Activated naive CD4-positive, alpha-beta T cell treated with anti-CD3 and anti-CD28 coated beads for 36 hours (primary cell): ENCODE measurements at regions of chr2 and their contacts with region 1.

Region 1: DNA sequence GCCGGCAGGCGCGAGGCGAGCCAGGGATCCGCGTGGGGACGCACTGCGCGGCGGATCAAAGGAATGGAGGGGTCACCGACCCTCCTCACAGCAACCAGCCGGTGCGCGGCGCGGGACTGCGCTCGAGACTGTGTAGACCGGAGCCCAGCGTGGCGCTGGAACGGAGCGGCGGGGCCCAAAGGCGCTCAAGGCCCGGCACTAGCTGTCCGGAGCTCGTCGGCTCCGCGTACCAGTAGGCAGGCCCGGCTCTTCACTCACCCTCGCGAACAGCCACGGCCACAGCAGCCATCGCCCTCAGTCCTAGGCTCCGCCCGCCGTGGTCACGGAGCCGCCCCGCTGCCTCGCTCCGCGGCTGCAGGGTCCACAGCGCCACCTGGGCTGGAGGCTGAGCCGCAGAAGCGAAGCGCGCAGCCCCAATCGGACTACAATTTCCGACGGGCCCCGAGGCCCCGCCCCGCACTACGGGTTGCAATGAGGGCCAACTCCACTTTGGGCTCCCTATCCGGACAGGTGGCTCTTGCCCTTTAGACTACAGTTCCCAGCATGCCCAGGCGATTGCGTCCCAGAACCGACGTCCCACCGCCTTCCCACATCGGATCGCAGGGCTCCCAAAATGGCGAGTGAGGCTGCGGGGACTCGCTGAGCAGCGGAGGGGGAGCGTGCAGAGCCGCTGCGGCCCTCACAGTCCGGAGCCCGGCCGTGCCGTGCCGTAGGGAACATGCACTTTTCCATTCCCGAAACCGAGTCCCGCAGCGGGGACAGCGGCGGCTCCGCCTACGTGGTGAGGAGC is at the starts of genes EIF2B4 and SNX17:
- DNase-seq: peak; percentile 100
- H3K4me3 Mint-ChIP-seq: peak within 1 kb of the TSS; percentile 83
- H3K27ac Mint-ChIP-seq: peak within 1 kb of the TSS; percentile 95
- H3K4me1 Mint-ChIP-seq: peaks cover 30% of the 10 kb centered on the region
- H3K27me3 Mint-ChIP-seq: no peaks in the 10 kb centered on the region
- total RNA-seq, gene EIF2B4: 24.4 to 25.2 TPM
- total RNA-seq, gene SNX17: 68.5 to 75.5 TPM

Region 2: DNA sequence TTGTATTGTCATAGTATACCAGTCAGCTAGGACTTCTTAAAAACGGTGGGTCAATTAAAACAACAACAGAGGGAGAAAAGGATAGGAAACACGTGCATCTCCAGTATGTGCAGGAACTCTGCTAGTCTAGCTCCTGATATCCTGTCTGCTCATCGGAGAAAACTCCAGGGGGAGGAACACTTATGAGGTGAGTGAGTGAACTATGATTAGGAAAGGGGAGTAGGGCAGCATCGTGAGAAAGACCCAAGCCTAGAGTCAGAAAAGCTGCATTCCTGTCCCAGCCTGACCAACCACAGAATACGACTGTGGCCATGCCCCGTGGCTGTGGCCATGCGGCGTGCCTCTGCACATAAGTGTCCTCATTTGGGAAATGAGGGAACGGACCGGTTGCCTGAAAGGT is 1731.0 kb before region 1 on chr2:
- CTCF ChIA-PET with region 1: no interaction called
- intact Hi-C with region 1: no loop called
- DNase-seq: no peak
- H3K4me3 Mint-ChIP-seq: no peak overlapping the region
- H3K27ac Mint-ChIP-seq: no peak overlapping the region
- H3K4me1 Mint-ChIP-seq: no peaks in the 10 kb centered on the region
- H3K27me3 Mint-ChIP-seq: no peaks in the 10 kb centered on the region

Region 3: GRCh38 chr2:27086090-27086723 is 284.0 kb before region 1 on chr2:
- CTCF ChIA-PET with region 1: no interaction called
- intact Hi-C with region 1: loop called (anchors 1 kb)
- DNase-seq: peak; percentile 96
- H3K4me3 Mint-ChIP-seq: peak overlapping the region; percentile 81
- H3K27ac Mint-ChIP-seq: peak overlapping the region; percentile 63
- H3K4me1 Mint-ChIP-seq: peaks cover 30% of the 10 kb centered on the region
- H3K27me3 Mint-ChIP-seq: no peaks in the 10 kb centered on the region

Region 4: GRCh38 chr2:27096748-27097297 is 273.4 kb before region 1 on chr2:
- CTCF ChIA-PET with region 1: no interaction called
- intact Hi-C with region 1: no loop called
- DNase-seq: no peak
- H3K4me3 Mint-ChIP-seq: no peak overlapping the region
- H3K27ac Mint-ChIP-seq: no peak overlapping the region
- H3K4me1 Mint-ChIP-seq: peaks cover 12% of the 10 kb centered on the region
- H3K27me3 Mint-ChIP-seq: no peaks in the 10 kb centered on the region

Region 5: DNA sequence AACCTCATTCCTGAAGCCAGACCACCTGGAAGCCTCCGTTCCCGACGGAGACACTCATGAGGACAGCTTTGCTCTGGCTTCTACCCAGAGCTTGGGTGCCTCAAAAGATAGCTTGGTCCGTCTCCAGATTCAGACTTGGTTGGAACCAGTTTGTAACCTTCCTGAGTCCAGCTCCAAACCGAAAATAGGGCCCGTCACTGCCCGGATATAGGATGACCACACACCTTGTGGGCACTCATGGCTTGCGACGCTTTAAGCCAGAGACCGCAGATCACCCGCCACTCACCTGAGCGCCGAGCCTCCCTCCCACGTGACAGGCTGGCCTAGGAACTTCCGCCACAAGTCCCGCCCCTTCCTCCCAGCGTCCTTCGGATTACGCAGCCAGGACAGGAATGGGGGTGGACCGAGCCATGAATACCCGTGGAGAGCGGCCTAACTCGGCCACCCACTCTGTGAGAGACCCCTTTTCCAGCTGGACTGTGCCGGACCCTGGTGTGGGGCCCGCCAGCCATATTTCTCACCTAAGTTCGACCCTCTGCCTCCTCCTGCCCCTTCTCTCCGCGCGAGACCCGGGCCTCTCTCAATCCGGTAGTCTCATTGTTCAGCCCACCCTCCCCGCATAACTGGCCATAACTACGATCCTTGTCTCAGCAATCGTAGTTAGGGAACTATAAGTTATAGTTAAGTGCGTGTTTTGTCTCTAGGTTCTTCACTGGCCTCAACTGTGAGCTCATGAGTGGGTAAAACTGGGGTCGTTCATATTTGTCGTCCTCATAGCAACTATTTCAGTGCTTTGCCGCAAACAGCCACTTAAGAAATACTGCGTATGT is 47.2 kb before region 1 on chr2 and contains the start of gene MPV17:
- CTCF ChIA-PET with region 1: interaction called, 3 read pairs
- intact Hi-C with region 1: loop called (anchors 1 kb)
- DNase-seq: peak; percentile 95
- H3K4me3 Mint-ChIP-seq: peak within 1 kb of the TSS; percentile 84
- H3K27ac Mint-ChIP-seq: peak within 1 kb of the TSS; percentile 85
- H3K4me1 Mint-ChIP-seq: peaks cover 14% of the 10 kb centered on the region
- H3K27me3 Mint-ChIP-seq: no peaks in the 10 kb centered on the region
- total RNA-seq, gene MPV17: 80.2 to 82.3 TPM

Region 6: DNA sequence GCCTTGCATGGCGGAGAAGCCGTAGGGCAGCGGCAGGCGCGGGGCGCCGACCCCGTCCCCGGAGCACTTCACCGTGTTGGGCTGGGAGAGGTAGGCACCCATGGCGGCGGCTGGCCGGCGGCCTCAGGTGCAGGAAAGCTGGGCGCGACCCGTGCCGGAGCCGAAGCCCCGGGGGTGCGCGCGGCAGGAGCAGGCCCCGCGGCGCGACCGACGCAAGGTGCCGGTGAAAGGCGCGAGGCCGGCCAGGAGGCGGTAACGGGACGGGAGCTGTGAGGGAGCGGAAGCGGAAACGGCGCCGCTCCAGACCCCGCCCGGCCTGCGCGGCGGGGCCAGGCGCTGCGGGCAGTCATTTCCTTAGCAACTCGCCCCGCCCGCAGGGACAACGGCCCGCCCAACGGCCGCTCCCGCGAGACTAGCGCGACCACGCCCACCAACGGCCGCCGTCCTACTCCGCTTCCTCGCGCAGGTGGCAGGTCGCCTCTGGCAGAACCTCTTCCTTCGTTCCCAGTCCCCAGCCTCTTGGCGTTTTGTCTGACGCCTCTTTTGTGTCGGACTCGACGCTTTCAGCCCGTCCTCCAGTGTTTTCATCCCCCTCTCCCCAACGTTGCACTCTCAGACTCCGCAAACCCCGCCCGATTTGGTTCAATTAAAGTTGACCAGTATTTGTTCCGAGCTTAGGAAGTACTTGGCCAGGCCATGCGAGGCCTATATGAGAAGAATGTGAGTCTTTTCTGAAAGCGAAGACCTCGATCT is 39.3 kb after region 1 on chr2 and contains the start of gene PPM1G:
- CTCF ChIA-PET with region 1: interaction called, 4 read pairs
- intact Hi-C with region 1: loop called (anchors 1 kb)
- DNase-seq: peak; percentile 97
- H3K4me3 Mint-ChIP-seq: peak within 1 kb of the TSS; percentile 89
- H3K27ac Mint-ChIP-seq: peak within 1 kb of the TSS; percentile 87
- H3K4me1 Mint-ChIP-seq: peaks cover 32% of the 10 kb centered on the region
- H3K27me3 Mint-ChIP-seq: no peaks in the 10 kb centered on the region
- total RNA-seq, gene PPM1G: 92.3 to 101 TPM

Region 7: GRCh38 chr2:27582695-27583389 is 212.6 kb after region 1 on chr2 and contains the start of gene ZNF512:
- CTCF ChIA-PET with region 1: no interaction called
- intact Hi-C with region 1: loop called (anchors 1 kb)
- DNase-seq: peak; percentile 86
- H3K4me3 Mint-ChIP-seq: peak within 1 kb of the TSS; percentile 99
- H3K27ac Mint-ChIP-seq: peak within 1 kb of the TSS; percentile 90
- H3K4me1 Mint-ChIP-seq: peaks cover 46% of the 10 kb centered on the region
- H3K27me3 Mint-ChIP-seq: no peaks in the 10 kb centered on the region
- total RNA-seq, gene ZNF512: 34.7 to 35.8 TPM